AG04450 (cell line): ENCODE measurements at regions of chr6 and their contacts with region 1.

Region 1: DNA sequence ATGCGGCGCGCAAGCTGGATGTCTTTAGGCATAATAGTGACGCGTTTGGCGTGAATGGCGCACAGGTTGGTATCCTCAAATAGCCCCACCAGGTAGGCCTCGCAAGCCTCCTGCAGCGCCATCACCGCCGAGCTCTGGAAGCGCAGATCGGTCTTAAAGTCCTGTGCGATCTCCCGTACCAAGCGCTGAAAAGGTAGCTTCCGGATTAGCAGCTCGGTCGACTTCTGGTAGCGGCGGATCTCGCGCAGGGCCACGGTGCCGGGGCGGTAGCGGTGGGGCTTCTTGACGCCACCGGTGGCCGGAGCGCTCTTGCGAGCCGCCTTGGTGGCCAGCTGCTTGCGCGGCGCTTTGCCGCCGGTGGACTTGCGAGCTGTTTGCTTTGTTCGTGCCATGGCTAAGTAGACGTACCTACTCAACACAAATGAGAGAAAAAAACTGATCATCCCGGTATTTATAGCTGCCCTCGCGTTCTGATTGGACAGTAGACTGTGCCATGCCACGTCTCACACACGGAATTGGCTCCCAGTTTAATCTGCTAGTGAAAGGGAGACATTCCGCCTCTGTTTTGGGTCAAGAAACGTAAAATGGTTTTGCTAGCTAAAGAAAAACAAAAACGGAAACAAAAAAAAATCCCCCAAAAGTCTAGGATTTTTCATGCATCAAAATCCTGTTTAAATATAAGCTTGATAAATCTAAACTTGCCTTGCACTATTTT is 40.1 kb downstream of the OR2B2 start:
- DNase-seq: peak; percentile 96
- H3K4me3 ChIP-seq: peak overlapping the region; percentile 69
- H3K27ac ChIP-seq: peak overlapping the region; percentile 94
- H3K27me3 ChIP-seq: no peaks in the 10 kb centered on the region
- CTCF ChIP-seq: peak; percentile 40; the same call in 1 of the 2 replicates

Region 2: GRCh38 chr6:27452496-27452897 is 419.6 kb before region 1 on chr6:
- CTCF ChIA-PET with region 1: no interaction called
- POLR2A ChIA-PET with region 1: no interaction called
- DNase-seq: no peak
- H3K4me3 ChIP-seq: no peak overlapping the region
- H3K27ac ChIP-seq: no peak overlapping the region
- H3K27me3 ChIP-seq: no peaks in the 10 kb centered on the region
- CTCF ChIP-seq: no peak

Region 3: DNA sequence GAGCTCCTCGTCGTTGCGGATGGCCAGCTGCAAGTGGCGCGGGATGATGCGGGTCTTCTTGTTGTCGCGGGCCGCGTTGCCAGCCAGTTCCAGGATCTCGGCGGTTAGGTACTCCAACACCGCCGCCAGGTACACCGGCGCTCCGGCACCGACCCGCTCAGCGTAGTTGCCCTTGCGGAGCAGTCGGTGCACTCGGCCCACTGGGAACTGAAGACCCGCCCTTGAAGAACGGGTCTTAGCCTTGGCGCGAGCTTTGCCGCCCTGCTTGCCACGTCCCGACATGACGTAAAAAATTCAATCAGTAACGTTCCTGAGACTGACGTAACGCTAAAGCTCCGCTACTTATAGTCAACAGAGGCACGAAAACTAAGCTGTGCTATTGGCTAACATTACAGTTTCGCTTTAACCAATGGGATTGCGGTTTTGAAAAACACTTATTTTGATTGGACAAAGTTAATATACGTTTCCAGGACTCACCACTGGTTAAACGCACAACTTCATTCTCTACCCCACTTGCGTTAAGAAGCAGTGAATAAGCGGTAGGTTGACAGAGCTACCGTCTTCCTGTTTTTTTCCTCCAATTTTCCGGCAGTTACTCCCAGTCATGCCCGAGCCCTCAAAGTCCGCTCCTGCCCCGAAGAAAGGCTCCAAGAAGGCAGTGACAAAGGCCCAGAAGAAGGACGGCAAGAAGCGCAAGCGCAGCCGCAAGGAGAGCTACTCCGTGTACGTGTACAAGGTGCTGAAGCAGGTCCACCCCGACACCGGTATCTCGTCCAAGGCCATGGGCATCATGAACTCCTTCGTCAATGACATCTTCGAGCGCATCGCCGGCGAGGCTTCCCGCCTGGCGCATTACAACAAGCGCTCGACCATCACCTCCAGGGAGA is 33.8 kb before region 1 on chr6:
- CTCF ChIA-PET with region 1: interaction called, 6 read pairs
- POLR2A ChIA-PET with region 1: interaction called, 289 read pairs
- DNase-seq: peak; percentile 99
- H3K4me3 ChIP-seq: peak overlapping the region; percentile 83
- H3K27ac ChIP-seq: peak overlapping the region; percentile 100
- H3K27me3 ChIP-seq: no peaks in the 10 kb centered on the region
- CTCF ChIP-seq: no peak